HEK293T (cell line): ENCODE measurements at regions of chr15 and their contacts with region 1.

Region 1: GRCh38 chr15:58070801-58071418 is 5.4 kb upstream of the ALDH1A2 start:
- DNase-seq: peak; percentile 39

Region 2: GRCh38 chr15:57861036-57861638 is 209.8 kb before region 1 on chr15:
- CTCF ChIA-PET with region 1: interaction called, 14 read pairs
- POLR2A ChIA-PET with region 1: interaction called, 3 read pairs
- DNase-seq: peak; percentile 33

Region 3: DNA sequence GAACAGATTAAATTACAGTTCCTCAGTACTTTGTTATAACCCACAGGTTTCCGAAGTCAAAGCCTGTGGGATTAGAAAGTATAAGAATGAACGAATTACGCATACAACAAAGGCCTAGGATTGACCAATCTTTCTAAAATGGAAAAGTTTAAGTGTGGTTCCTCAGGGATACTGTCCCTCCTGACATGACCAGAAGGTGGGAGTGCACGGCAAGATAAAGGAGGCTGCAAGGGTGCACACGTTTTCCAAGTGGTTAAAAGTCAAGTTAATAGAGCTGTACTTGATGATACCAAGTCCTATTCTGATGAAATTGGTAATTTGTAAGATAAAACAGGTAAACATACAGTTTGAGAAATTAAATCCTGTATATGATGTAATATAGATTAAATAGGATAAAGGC is 101.6 kb before region 1 on chr15:
- CTCF ChIA-PET with region 1: interaction called, 19 read pairs
- POLR2A ChIA-PET with region 1: no interaction called
- DNase-seq: peak; percentile 17

Region 4: GRCh38 chr15:58182460-58183163 is 111.7 kb after region 1 on chr15:
- CTCF ChIA-PET with region 1: interaction called, 12 read pairs
- POLR2A ChIA-PET with region 1: no interaction called
- DNase-seq: peak; percentile 72